GM12878 (cell line): ENCODE measurements at regions of chr9 and their contacts with region 1.

Region 1: GRCh38 chr9:91775011-91775707 is 174.9 kb downstream of the ROR2 start:
- DNase-seq: no peak
- ATAC-seq: peak; percentile 94
- H3K4me3 ChIP-seq: no peak overlapping the region
- H3K27ac ChIP-seq: no peak overlapping the region
- H3K4me1 ChIP-seq: no peaks in the 10 kb centered on the region
- H3K27me3 ChIP-seq: peaks cover 0 to 11% of the 10 kb centered on the region in 2 experiments; a peak in 3 of 4 replicates
- CTCF ChIP-seq: peak; percentile 86 to 95 (median 88)
- EP300 ChIP-seq: no peak
- POLR2A ChIP-seq: no peak
- RAD21 ChIP-seq: peak; percentile 88

Region 2: GRCh38 chr9:91795598-91796241 is 20.6 kb after region 1 on chr9:
- CTCF ChIA-PET with region 1: no interaction called
- POLR2A ChIA-PET with region 1: no interaction called
- RAD21 ChIA-PET with region 1: no interaction called
- SMC1A ChIA-PET with region 1: no interaction called
- in situ Hi-C with region 1: no loop called
- intact Hi-C with region 1: no loop called
- DNase-seq: no peak
- ATAC-seq: no peak
- H3K4me3 ChIP-seq: no peak overlapping the region
- H3K27ac ChIP-seq: no peak overlapping the region
- H3K4me1 ChIP-seq: peaks cover 5% of the 10 kb centered on the region; the same call in 1 of the 2 replicates
- H3K27me3 ChIP-seq: no peaks in the 10 kb centered on the region
- CTCF ChIP-seq: no peak
- EP300 ChIP-seq: no peak
- POLR2A ChIP-seq: no peak
- RAD21 ChIP-seq: no peak

Region 3: GRCh38 chr9:91905995-91906469 is 130.9 kb after region 1 on chr9:
- CTCF ChIA-PET with region 1: no interaction called
- POLR2A ChIA-PET with region 1: no interaction called
- RAD21 ChIA-PET with region 1: no interaction called
- SMC1A ChIA-PET with region 1: no interaction called
- in situ Hi-C with region 1: no loop called
- intact Hi-C with region 1: no loop called
- DNase-seq: no peak
- ATAC-seq: peak; percentile 79
- H3K4me3 ChIP-seq: peak overlapping the region; percentile 42; the same call in 1 of the 2 replicates
- H3K27ac ChIP-seq: no peak overlapping the region
- H3K4me1 ChIP-seq: no peaks in the 10 kb centered on the region; the same call in 1 of the 2 replicates
- H3K27me3 ChIP-seq: 0 out of 4 replicates have a peak, but pooled peaks cover 0 to 3% of the 10 kb centered on the region in 2 experiments
- CTCF ChIP-seq: no peak
- EP300 ChIP-seq: no peak
- POLR2A ChIP-seq: no peak
- RAD21 ChIP-seq: no peak

Region 4: GRCh38 chr9:91949946-91950664 is 174.9 kb after region 1 on chr9 and contains the start of gene ROR2:
- CTCF ChIA-PET with region 1: interaction called, 6 read pairs
- POLR2A ChIA-PET with region 1: no interaction called
- RAD21 ChIA-PET with region 1: no interaction called
- SMC1A ChIA-PET with region 1: no interaction called
- in situ Hi-C with region 1: no loop called
- intact Hi-C with region 1: loop called (anchors 1 kb)
- DNase-seq: no peak
- ATAC-seq: peak; percentile 92
- H3K4me3 ChIP-seq: peak within 1 kb of the TSS; percentile 11; the same call in 1 of the 2 replicates
- H3K27ac ChIP-seq: no peak within 1 kb of the TSS
- H3K4me1 ChIP-seq: no peaks in the 10 kb centered on the region
- H3K27me3 ChIP-seq: peaks cover 10 to 26% of the 10 kb centered on the region in 2 experiments
- CTCF ChIP-seq: peak; percentile 34 to 36 (median 35); a peak in 4 of 6 replicates
- EP300 ChIP-seq: no peak
- POLR2A ChIP-seq: no peak
- RAD21 ChIP-seq: peak; percentile 22; the same call in 1 of the 2 replicates
- polyA plus RNA-seq, gene ROR2: not detected

Region 5: DNA sequence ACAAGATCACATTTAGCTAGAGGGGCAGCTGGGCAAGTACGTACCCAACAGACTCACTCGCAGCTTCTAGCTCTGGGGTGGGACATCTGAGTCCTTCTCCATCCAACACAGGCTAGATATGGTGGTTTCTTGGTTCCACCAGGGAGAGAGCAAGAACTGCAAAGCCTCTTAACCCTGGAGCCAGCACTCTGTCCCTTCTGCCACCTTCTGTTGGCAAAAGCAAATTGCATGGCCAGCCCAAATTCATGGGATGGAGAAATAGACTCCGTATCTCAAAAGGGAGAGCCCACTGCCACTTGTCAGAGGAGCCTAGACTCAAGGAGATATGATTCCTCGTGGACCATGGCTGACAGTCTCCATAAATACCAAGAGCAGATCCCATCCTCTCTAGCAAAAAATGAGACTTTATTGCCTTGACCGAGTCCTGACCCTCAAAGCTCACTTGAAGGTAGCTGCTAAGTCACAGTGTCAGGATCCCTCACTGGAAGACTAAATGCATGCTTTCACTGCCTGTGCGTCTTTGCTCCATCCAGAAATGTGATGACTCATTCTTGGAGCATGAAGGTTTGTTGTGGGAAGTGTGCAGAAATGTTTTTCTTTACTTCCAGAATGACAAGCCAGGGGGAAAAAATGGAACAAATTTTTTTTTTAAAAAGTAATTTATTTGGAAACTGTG is 203.7 kb after region 1 on chr9:
- CTCF ChIA-PET with region 1: interaction called, 3 read pairs
- POLR2A ChIA-PET with region 1: no interaction called
- RAD21 ChIA-PET with region 1: no interaction called
- SMC1A ChIA-PET with region 1: no interaction called
- in situ Hi-C with region 1: no loop called
- intact Hi-C with region 1: loop called (anchors 1 kb)
- DNase-seq: no peak
- ATAC-seq: peak; percentile 52; the same call in 2 of the 3 replicates
- H3K4me3 ChIP-seq: no peak overlapping the region
- H3K27ac ChIP-seq: no peak overlapping the region
- H3K4me1 ChIP-seq: no peaks in the 10 kb centered on the region
- H3K27me3 ChIP-seq: peaks cover 0 to 1% of the 10 kb centered on the region in 2 experiments; a peak in 1 of 4 replicates
- CTCF ChIP-seq: peak; percentile 31 to 33 (median 32); a peak in 4 of 6 replicates
- EP300 ChIP-seq: no peak
- POLR2A ChIP-seq: no peak
- RAD21 ChIP-seq: peak; percentile 30